CD8-positive, alpha-beta T cell (primary cell): ENCODE measurements at regions of chr2 and their contacts with region 1.

Region 1: DNA sequence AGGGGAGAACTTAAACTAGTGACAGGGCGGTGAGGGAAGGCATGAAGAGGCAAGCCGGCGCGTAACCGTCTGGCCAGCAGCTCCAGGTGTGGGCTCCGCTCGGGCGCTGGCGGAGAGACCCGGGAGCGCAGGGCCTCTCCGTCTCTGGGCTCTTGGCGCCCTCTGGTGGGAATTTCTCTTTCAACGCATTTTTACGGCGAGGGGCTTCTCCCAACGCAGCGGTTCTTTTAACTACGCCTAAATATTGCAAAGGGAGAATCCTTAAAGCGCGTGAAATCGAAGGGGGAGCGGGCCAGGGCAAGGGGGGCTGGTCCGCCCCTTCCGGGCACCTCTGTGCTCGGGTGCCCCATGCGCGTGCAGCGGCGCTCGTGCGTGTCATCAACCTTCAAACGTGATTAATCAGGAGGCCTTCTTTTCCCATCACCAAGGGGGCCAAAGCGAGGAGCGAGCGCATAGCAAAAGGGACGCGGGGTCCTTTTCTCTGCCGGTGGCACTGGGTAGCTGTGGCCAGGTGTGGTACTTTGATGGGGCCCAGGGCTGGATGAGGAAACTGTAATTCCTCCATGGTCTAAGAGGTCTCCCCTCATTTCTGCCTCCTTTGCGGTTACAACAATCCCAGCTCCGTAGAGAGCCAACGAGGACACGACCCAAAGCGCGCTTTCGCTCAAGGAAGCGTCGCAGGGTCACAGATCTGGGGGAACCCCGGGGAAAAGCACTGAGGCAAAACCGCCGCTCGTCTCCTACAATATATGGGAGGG is 762 bp upstream of the GAD1 start:
- DNase-seq: peak in 8 of 9 experiments; percentile 39 to 78 (median 64)
- ATAC-seq: peak; percentile 48
- H3K4me3 ChIP-seq: peak overlapping the region; percentile 38 to 56
- H3K4me3 Mint-ChIP-seq: peak overlapping the region; percentile 59
- H3K27ac ChIP-seq: no peak overlapping the region
- H3K27ac Mint-ChIP-seq: no peak overlapping the region
- H3K4me1 ChIP-seq: peaks cover 57% of the 10 kb centered on the region
- H3K4me1 Mint-ChIP-seq: peaks cover 50% of the 10 kb centered on the region
- H3K27me3 ChIP-seq: peaks cover 54 to 58% of the 10 kb centered on the region in 2 experiments
- H3K27me3 Mint-ChIP-seq: peaks cover 72% of the 10 kb centered on the region
- CTCF ChIP-seq: peak; percentile 74

Region 2: DNA sequence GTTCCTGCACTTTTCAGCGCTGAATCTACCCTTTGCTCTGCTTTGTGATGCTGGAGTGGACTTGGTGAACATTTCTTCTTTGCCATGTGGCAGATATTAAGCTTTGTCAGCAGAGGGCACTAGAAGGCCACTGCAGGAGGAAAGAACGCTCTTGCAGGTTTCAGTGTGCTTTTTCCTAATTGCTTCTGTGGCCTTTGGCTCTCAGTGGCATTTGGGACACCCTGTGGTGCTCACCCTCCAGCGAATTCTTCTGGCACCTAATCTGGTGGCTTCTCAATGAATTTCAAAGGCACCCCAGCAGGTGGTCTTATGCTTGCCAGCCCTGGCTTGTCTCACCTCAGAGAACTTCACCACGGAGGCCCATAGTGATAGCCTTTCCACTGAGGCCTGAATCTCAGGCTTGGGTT is 491.3 kb before region 1 on chr2:
- CTCF ChIA-PET with region 1: interaction called, 29 read pairs
- POLR2A ChIA-PET with region 1: no interaction called
- intact Hi-C with region 1: loop called (anchors 1 kb)
- DNase-seq: peak in 5 of 9 experiments; percentile 15 to 57 (median 37)
- ATAC-seq: no peak
- H3K4me3 ChIP-seq: no peak overlapping the region
- H3K4me3 Mint-ChIP-seq: no peak overlapping the region
- H3K27ac ChIP-seq: no peak overlapping the region
- H3K27ac Mint-ChIP-seq: no peak overlapping the region
- H3K4me1 ChIP-seq: no peaks in the 10 kb centered on the region
- H3K4me1 Mint-ChIP-seq: no peaks in the 10 kb centered on the region
- H3K27me3 ChIP-seq: no peaks in the 10 kb centered on the region
- H3K27me3 Mint-ChIP-seq: peaks cover 2% of the 10 kb centered on the region
- CTCF ChIP-seq: peak; percentile 46

Region 3: GRCh38 chr2:170396799-170397459 is 419.0 kb before region 1 on chr2:
- CTCF ChIA-PET with region 1: interaction called, 18 read pairs
- POLR2A ChIA-PET with region 1: no interaction called
- intact Hi-C with region 1: loop called in 1 of 2 experiments (anchors 1 kb)
- DNase-seq: peak in 2 of 9 experiments; percentile 4 to 19
- ATAC-seq: no peak
- H3K4me3 ChIP-seq: no peak overlapping the region
- H3K4me3 Mint-ChIP-seq: no peak overlapping the region
- H3K27ac ChIP-seq: no peak overlapping the region
- H3K27ac Mint-ChIP-seq: no peak overlapping the region
- H3K4me1 ChIP-seq: no peaks in the 10 kb centered on the region
- H3K4me1 Mint-ChIP-seq: no peaks in the 10 kb centered on the region
- H3K27me3 ChIP-seq: no peaks in the 10 kb centered on the region
- H3K27me3 Mint-ChIP-seq: peaks cover 30% of the 10 kb centered on the region
- CTCF ChIP-seq: no peak

Region 4: GRCh38 chr2:170651624-170652325 is 164.2 kb before region 1 on chr2:
- CTCF ChIA-PET with region 1: no interaction called
- POLR2A ChIA-PET with region 1: no interaction called
- intact Hi-C with region 1: loop called in 1 of 2 experiments (anchors 10 kb)
- DNase-seq: peak; percentile 5 to 87 (median 47)
- ATAC-seq: peak; percentile 97
- H3K4me3 ChIP-seq: no peak overlapping the region
- H3K4me3 Mint-ChIP-seq: peak overlapping the region; percentile 1
- H3K27ac ChIP-seq: no peak overlapping the region
- H3K27ac Mint-ChIP-seq: no peak overlapping the region
- H3K4me1 ChIP-seq: peaks cover 21% of the 10 kb centered on the region
- H3K4me1 Mint-ChIP-seq: peaks cover 30% of the 10 kb centered on the region
- H3K27me3 ChIP-seq: no peaks in the 10 kb centered on the region
- H3K27me3 Mint-ChIP-seq: peaks cover 4% of the 10 kb centered on the region
- CTCF ChIP-seq: no peak

Region 5: GRCh38 chr2:170770606-170771420 is 45.1 kb before region 1 on chr2:
- CTCF ChIA-PET with region 1: interaction called, 3 read pairs
- POLR2A ChIA-PET with region 1: no interaction called
- intact Hi-C with region 1: loop called in 1 of 2 experiments (anchors 1 kb)
- DNase-seq: peak; percentile 29 to 86 (median 51)
- ATAC-seq: peak; percentile 84
- H3K4me3 ChIP-seq: peak overlapping the region; percentile 63 to 74
- H3K4me3 Mint-ChIP-seq: peak overlapping the region; percentile 82
- H3K27ac ChIP-seq: peak overlapping the region in 1 of 2 experiments; percentile 23
- H3K27ac Mint-ChIP-seq: no peak overlapping the region
- H3K4me1 ChIP-seq: peaks cover 12% of the 10 kb centered on the region
- H3K4me1 Mint-ChIP-seq: peaks cover 12% of the 10 kb centered on the region
- H3K27me3 ChIP-seq: no peaks in the 10 kb centered on the region
- H3K27me3 Mint-ChIP-seq: peaks cover 10% of the 10 kb centered on the region
- CTCF ChIP-seq: no peak

Region 6: DNA sequence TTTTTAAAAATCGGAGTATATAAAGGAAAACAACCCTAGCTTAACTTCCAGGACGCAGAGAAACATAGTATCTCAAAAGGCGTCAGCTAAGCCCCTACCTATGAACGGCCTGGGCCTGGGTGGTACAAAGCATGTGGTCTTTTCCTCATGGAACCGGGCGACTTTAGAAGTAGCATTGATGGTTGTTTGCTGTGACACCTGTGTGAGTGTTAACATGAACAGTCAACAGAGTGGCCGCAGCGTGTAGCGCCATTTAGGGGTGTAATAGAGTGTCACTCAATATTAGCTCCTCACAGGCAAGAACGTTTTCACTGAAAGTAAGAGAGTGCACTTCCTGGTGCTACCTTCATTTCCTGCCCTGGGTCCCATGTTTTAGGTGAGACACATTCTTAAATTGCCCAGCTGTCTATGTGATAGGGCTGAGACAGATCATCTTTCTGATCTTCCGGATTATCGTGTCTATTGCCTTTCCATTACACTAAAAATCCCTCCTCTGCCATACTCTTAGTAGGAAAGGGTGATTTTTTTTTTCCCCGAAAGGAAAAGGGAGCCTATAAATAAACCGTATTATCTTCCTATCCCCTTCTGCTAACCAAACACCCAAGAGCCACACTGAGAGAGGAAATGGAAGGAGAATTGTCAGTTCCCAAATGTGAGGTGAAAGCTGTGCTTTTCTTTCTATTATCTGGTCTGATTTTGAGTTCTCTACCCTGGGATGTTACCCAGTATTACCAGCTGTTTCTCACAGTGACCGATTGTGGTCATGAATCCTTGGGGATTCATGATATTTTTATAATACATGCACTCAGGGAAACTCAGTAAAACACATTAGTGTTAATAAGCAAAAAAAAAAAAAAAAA is 114.4 kb after region 1 on chr2:
- CTCF ChIA-PET with region 1: no interaction called
- POLR2A ChIA-PET with region 1: no interaction called
- intact Hi-C with region 1: no loop called
- DNase-seq: peak; percentile 25 to 86 (median 59)
- ATAC-seq: peak; percentile 41
- H3K4me3 ChIP-seq: peak overlapping the region; percentile 78 to 92
- H3K4me3 Mint-ChIP-seq: peak overlapping the region; percentile 98
- H3K27ac ChIP-seq: peak overlapping the region; percentile 68 to 77
- H3K27ac Mint-ChIP-seq: peak overlapping the region; percentile 97
- H3K4me1 ChIP-seq: peaks cover 30% of the 10 kb centered on the region
- H3K4me1 Mint-ChIP-seq: peaks cover 44% of the 10 kb centered on the region
- H3K27me3 ChIP-seq: no peaks in the 10 kb centered on the region
- H3K27me3 Mint-ChIP-seq: no peaks in the 10 kb centered on the region
- CTCF ChIP-seq: no peak